ENCODE measurements at regions of chr13 and their contacts with region 1.

Region 1: DNA sequence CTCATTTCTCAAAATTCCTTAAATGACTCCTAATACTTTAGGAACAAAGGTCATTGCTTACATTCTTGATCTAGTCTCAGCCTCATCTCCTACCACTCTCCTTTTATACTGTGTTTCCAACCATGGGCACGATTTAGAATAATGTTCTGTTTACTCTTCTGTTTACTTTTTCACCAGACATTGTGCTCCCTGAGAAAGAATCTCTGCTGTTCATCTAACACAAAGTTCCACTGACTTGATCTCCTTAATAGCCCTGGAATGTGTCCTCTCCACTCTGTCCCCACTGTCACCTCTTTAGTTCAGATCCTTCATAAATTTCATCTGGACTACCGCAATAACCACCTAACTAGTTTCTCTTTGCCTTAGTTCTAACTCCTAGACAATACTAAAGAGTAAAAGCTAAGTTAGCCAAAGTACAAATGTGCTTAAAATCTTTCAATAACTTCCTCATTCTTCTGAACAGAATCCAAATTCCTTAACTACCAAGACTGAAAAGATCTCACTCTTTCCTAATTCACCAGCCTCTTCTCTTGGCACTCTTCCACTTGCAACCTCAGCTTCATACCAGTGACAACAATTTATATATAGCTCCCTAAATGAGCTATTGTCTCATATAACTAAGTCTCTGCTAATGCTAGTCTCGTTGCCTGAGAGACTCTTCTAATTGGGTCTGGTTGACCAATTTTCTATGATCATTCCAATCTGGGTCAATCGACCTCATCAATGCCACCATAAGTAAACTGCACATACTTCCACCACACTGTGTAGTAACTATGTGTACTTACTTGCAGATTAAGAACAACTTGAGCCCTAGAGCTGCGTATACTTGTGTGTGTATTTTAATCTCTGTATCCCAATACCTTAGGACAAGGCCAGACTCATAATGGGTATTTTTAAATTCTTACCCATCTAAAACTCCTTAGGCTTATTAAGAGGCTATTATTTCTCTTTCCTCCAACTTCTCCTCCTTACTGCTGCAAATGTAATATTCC is 179.9 kb downstream of the VWA8 start:
- DNase-seq: no peak
- H3K4me3 Mint-ChIP-seq: no peak overlapping the region
- H3K27ac Mint-ChIP-seq: no peak overlapping the region
- H3K4me1 Mint-ChIP-seq: no peaks in the 10 kb centered on the region
- H3K27me3 Mint-ChIP-seq: no peaks in the 10 kb centered on the region

Region 2: GRCh38 chr13:41678249-41678648 is 102.8 kb before region 1 on chr13:
- intact Hi-C with region 1: no loop called
- DNase-seq: no peak
- H3K4me3 Mint-ChIP-seq: no peak overlapping the region
- H3K27ac Mint-ChIP-seq: no peak overlapping the region
- H3K4me1 Mint-ChIP-seq: peaks cover 2% of the 10 kb centered on the region
- H3K27me3 Mint-ChIP-seq: no peaks in the 10 kb centered on the region

Region 3: DNA sequence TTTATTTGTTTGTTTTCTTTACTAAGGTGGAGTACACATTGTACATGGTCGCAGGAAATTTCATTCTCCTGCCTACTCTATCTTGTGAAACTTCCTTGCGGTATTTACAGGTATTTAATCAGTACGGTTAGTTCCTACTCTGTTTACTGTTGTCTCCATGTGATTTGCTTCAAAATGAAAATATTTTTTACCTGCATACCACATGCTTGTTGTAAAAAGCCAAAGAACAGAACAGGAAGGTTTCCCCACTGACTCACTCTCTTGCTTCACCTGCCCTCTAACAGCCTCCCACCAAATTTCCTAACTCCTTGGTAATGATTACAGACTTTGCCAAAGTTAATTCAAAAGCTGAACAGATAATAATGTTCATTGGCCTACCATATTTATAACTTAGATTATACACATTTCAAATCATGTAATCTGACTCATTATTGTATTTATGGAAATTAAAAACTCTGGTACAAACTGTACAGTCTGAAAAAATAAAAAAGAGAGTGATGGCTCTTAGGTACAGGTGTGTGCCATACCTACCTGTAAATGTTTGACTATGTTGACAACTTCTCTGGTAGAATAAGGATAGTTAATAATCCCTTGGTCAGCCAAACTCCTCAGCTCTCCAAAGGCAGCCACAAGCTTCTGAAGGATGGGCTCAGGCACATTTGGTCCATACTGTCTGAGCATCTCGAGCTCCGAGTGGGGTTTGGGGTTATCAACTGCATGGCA is 60.0 kb before region 1 on chr13:
- intact Hi-C with region 1: loop called (anchors 10 kb)
- DNase-seq: no peak
- H3K4me3 Mint-ChIP-seq: no peak overlapping the region
- H3K27ac Mint-ChIP-seq: no peak overlapping the region
- H3K4me1 Mint-ChIP-seq: peaks cover 3% of the 10 kb centered on the region
- H3K27me3 Mint-ChIP-seq: no peaks in the 10 kb centered on the region

Measured in activated T-helper 2 cell treated with anti-CD3 and anti-CD28 coated beads, Interferon-gamma antibody, Interleukin-2, Interleukin-4, amounts not matched to agents 10 μg/mL and 5 μg/mL and 100 μg/mL, durations not matched to agents 14 hours and 24 hours and 36 hours (primary cell).